ENCODE measurements at regions of chr18 and their contacts with region 1.

Region 1: DNA sequence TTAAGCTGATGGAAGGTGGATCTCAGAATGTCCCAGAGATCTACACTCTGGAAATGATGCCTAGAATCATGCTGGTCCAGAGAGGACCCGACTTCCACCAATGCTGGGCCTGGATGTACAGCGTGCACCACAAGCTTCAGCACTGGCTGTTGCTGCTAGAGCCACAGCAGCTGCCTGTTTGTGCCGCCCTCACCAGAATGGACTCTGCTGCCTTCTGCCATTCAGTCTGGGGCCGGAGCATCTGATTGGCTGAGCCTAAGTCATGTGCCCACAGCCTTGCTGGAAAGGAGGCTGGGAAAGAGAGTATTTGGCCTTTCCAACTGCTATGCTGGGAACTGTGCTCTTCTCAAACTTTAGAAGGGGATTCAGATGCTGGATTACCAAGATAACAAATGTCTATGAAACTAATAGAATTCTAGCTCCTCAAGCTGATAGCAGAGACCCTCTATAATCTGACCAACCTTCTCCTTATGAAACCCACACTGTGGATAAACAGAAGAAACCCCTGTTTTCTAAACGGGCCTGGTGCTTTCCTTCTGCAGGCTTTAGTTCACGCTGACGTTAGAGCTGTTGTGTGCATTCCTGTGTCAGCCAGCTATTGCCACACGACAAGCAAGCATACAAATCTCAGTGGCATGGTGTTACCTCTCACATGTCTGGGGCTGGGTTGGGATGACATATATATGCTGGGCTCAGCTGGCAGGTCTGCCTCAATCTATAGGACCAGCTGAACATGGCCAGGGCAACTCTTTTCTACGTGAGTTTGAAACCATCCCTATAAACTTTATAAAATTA is 4.1 kb upstream of the LOXHD1 start:
- DNase-seq: peak; percentile 48
- H3K4me3 ChIP-seq: no peak overlapping the region
- H3K27ac ChIP-seq: no peak overlapping the region
- H3K4me1 ChIP-seq: no peaks in the 10 kb centered on the region
- H3K27me3 ChIP-seq: no peaks in the 10 kb centered on the region; the same call in 1 of the 2 replicates
- CTCF ChIP-seq: no peak
- EP300 ChIP-seq: no peak
- RAD21 ChIP-seq: no peak

Region 2: GRCh38 chr18:46148810-46149209 is 512.3 kb before region 1 on chr18:
- CTCF ChIA-PET with region 1: interaction called, 101 read pairs
- POLR2A ChIA-PET with region 1: no interaction called
- DNase-seq: peak; percentile 70
- H3K4me3 ChIP-seq: no peak overlapping the region; a peak in 1 of 4 replicates
- H3K27ac ChIP-seq: no peak overlapping the region
- H3K4me1 ChIP-seq: peaks cover 12 to 13% of the 10 kb centered on the region in 2 experiments; a peak in 1 of 4 replicates
- H3K27me3 ChIP-seq: no peaks in the 10 kb centered on the region
- CTCF ChIP-seq: peak; percentile 84
- EP300 ChIP-seq: no peak
- RAD21 ChIP-seq: peak; percentile 81

Region 3: DNA sequence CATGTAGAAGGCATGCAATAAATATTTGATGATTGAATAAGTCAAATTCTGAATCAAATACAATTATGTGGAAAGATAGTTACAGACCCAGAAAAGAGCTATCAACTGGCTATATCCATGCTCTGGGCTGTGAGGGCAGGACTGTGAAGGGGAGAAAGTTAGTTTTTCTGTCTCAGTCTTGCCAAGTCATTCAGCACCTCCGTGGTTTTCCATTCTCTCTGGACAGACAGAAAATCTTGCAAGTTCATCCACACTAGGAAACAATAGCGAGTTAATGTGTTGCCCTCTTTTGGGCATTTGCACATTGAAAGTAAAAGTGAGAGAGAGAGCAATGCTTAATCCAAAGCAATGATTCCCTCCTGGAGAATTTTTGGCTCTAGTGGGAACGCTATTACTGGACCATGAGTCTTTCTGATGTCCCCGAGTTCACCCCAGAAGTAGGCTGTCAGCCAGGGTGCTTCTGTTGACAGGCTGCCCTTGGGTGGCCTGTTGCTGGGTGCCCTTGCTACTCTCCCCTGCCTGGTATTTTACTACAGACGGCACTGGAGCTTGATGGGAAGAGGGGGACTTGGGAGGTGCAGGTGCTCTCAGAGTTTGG is 242.4 kb before region 1 on chr18:
- CTCF ChIA-PET with region 1: interaction called, 11 read pairs
- POLR2A ChIA-PET with region 1: no interaction called
- DNase-seq: no peak
- H3K4me3 ChIP-seq: no peak overlapping the region
- H3K27ac ChIP-seq: peak overlapping the region in 1 of 2 experiments; percentile 96; a peak in 2 of 4 replicates
- H3K4me1 ChIP-seq: peaks cover 0 to 56% of the 10 kb centered on the region in 2 experiments; a peak in 2 of 4 replicates
- H3K27me3 ChIP-seq: no peaks in the 10 kb centered on the region
- CTCF ChIP-seq: no peak
- EP300 ChIP-seq: no peak
- RAD21 ChIP-seq: no peak

Region 4: GRCh38 chr18:46622999-46623398 is 38.2 kb before region 1 on chr18:
- CTCF ChIA-PET with region 1: interaction called, 33 read pairs
- POLR2A ChIA-PET with region 1: no interaction called
- DNase-seq: peak; percentile 27
- H3K4me3 ChIP-seq: no peak overlapping the region
- H3K27ac ChIP-seq: peak overlapping the region in 1 of 2 experiments; percentile 86; a peak in 2 of 4 replicates
- H3K4me1 ChIP-seq: peaks cover 0 to 26% of the 10 kb centered on the region in 2 experiments; a peak in 2 of 4 replicates
- H3K27me3 ChIP-seq: no peaks in the 10 kb centered on the region
- CTCF ChIP-seq: peak; percentile 37
- EP300 ChIP-seq: no peak
- RAD21 ChIP-seq: peak; percentile 63

Region 5: DNA sequence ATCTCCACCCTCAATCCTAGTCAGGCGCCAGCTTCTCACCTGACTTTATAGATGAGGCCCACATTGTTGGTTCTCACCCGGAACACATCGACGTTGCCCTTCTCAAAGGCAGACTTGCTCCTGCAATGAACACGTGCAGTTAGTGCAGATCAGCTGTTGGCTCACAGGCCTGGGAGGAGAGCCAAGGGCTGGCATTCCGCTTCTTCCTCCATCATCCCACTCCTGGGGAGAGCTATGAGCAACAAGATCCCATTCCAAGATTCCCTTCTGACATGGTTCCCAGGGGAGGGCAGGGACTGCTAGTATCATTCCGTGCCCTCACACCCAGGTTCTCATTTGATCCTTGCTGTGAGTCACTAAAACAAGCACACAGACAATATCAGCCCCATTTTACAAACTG is 19.2 kb before region 1 on chr18:
- CTCF ChIA-PET with region 1: interaction called, 30 read pairs
- POLR2A ChIA-PET with region 1: interaction called, 3 read pairs
- DNase-seq: no peak
- H3K4me3 ChIP-seq: no peak overlapping the region
- H3K27ac ChIP-seq: no peak overlapping the region
- H3K4me1 ChIP-seq: no peaks in the 10 kb centered on the region
- H3K27me3 ChIP-seq: peaks cover 29% of the 10 kb centered on the region; the same call in 1 of the 2 replicates
- CTCF ChIP-seq: no peak
- EP300 ChIP-seq: no peak
- RAD21 ChIP-seq: no peak

Region 6: DNA sequence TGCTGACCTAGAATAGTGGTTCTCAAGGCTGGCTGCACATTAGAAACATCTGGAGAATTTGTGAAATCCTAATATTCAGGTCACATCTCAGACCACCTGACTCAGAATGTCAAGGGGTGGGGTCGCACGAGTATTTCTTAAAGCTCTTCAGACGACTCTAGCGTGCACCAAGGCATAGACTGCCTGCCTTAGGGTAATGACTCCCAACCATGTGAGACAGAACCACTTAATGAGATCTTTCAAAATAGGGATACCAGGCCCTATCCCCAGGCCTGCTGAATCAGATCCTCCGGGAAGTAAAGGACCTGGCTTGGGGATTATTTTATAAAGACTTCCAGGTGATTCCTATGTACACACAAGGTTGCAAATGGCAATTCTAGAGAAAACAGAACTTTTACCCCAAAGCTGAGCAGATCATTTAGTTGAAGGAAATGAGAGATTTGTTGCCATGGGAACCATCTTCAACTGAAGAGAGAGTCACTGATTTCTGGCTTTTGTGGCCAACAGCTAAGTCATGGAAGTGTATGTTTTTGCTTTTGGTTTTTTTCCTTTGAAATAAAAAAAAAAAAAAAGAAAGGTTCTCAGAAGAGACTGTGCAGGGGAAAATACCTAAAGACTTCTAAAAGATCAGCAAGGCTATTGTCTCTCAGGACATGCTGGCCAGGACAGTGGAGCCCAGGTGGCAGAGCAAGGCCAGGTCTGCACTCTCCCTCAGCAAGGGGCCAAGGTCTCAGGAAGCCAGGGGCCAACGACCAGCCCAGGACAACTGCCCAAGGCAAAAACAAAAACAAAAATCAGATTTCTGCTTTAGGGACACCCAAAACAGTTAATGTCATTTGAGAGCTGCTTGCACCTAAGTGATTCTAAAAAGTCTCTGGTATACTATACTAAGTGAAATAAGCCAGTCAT is 11.2 kb after region 1 on chr18:
- CTCF ChIA-PET with region 1: interaction called, 32 read pairs
- POLR2A ChIA-PET with region 1: no interaction called
- DNase-seq: no peak
- H3K4me3 ChIP-seq: no peak overlapping the region
- H3K27ac ChIP-seq: no peak overlapping the region
- H3K4me1 ChIP-seq: no peaks in the 10 kb centered on the region
- H3K27me3 ChIP-seq: no peaks in the 10 kb centered on the region
- CTCF ChIP-seq: no peak
- EP300 ChIP-seq: no peak
- RAD21 ChIP-seq: no peak